Activated naive CD4-positive, alpha-beta T cell treated with anti-CD3 and anti-CD28 coated beads, Interleukin-2, amount 10 ng/mL, durations not matched to agents 7 days and 5 days (primary cell): ENCODE measurements at regions of chr6 and their contacts with region 1.

Region 1: DNA sequence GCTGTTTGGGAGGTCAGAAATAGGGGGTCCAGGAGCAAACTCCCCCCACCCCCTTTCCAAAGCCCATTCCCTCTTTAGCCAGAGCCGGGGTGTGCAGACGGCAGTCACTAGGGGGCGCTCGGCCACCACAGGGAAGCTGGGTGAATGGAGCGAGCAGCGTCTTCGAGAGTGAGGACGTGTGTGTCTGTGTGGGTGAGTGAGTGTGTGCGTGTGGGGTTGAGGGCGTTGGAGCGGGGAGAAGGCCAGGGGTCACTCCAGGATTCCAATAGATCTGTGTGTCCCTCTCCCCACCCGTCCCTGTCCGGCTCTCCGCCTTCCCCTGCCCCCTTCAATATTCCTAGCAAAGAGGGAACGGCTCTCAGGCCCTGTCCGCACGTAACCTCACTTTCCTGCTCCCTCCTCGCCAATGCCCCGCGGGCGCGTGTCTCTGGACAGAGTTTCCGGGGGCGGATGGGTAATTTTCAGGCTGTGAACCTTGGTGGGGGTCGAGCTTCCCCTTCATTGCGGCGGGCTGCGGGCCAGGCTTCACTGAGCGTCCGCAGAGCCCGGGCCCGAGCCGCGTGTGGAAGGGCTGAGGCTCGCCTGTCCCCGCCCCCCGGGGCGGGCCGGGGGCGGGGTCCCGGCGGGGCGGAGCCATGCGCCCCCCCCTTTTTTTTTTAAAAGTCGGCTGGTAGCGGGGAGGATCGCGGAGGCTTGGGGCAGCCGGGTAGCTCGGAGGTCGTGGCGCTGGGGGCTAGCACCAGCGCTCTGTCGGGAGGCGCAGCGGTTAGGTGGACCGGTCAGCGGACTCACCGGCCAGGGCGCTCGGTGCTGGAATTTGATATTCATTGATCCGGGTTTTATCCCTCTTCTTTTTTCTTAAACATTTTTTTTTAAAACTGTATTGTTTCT is at the start of gene VEGFA:
- DNase-seq: peak; percentile 92
- H3K4me3 Mint-ChIP-seq: peak within 1 kb of the TSS; percentile 96
- H3K27ac Mint-ChIP-seq: peak within 1 kb of the TSS; percentile 88
- H3K4me1 Mint-ChIP-seq: peaks cover 29% of the 10 kb centered on the region
- H3K27me3 Mint-ChIP-seq: peaks cover 34% of the 10 kb centered on the region

Region 2: DNA sequence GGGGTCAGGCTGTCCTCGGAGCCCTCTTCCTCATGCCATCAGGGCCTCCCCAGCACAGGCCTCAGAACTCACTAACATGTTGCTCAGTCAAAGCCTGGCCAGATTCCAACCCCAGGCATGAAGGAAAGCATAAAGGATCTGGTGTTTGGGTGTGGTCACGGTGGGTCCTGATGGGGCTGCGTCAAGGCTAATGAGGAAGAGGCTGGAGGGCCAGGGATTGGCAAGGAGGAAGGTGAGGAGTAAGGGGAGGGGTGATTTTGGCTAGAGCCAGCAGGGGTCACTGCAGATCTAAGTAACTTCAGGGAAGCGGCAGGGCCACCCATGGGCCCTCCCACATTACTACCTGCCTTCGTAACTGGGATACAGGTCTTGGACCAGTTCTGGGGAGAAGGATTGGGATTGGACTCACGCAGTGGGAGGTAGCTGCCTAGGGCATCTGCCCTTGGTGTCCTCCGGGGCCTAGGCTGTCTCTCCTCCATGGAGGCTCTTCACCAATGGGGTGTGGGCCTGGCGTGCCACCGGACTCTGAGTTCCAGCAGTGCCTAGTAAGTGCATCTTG is 46.0 kb before region 1 on chr6:
- CTCF ChIA-PET with region 1: interaction called, 28 read pairs
- DNase-seq: peak; percentile 84
- H3K4me3 Mint-ChIP-seq: no peak overlapping the region
- H3K27ac Mint-ChIP-seq: no peak overlapping the region
- H3K4me1 Mint-ChIP-seq: peaks cover 30% of the 10 kb centered on the region
- H3K27me3 Mint-ChIP-seq: peaks cover 26% of the 10 kb centered on the region

Region 3: DNA sequence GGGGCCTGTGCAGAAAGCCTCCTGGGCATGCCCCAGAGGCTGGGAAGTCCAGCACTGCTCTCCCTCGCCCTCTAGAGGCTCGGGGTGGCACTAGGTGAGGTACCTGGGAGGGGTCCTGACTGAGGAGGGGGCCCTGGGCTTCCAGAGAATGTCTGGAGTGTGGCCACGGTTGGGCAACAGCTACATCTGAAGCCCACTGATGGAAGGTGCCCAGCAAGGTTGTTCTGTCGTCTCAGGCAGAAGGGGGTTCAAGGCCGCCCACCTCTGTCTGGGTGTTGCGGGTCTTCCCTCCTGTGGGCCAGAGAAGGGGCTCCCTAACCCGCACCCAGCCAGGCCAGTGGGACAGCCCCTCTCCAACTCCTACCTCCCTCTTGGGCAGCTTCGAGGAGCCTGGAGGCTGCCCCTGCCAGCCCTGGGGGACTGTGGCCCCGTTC is 11.1 kb before region 1 on chr6:
- CTCF ChIA-PET with region 1: interaction called, 15 read pairs
- DNase-seq: peak; percentile 47
- H3K4me3 Mint-ChIP-seq: no peak overlapping the region
- H3K27ac Mint-ChIP-seq: no peak overlapping the region
- H3K4me1 Mint-ChIP-seq: peaks cover 2% of the 10 kb centered on the region
- H3K27me3 Mint-ChIP-seq: peaks cover 53% of the 10 kb centered on the region